Activated T-helper 2 cell treated with anti-CD3 and anti-CD28 coated beads, Interferon-gamma antibody, Interleukin-2, Interleukin-4, amounts not matched to agents 10 μg/mL and 5 μg/mL and 100 μg/mL, durations not matched to agents 14 hours and 24 hours and 36 hours (primary cell): ENCODE measurements at regions of chr1 and their contacts with region 1.

Region 1: GRCh38 chr1:32413507-32414185 is 19.4 kb upstream of the BSDC1 start:
- DNase-seq: peak; percentile 63
- H3K4me3 Mint-ChIP-seq: no peak overlapping the region
- H3K27ac Mint-ChIP-seq: peak overlapping the region; percentile 26
- H3K4me1 Mint-ChIP-seq: peaks cover 3% of the 10 kb centered on the region
- H3K27me3 Mint-ChIP-seq: peaks cover 13% of the 10 kb centered on the region

Region 2: GRCh38 chr1:32159189-32159885 is 254.3 kb before region 1 on chr1:
- intact Hi-C with region 1: no loop called
- DNase-seq: no peak
- H3K4me3 Mint-ChIP-seq: no peak overlapping the region
- H3K27ac Mint-ChIP-seq: peak overlapping the region; percentile 69
- H3K4me1 Mint-ChIP-seq: peaks cover 13% of the 10 kb centered on the region
- H3K27me3 Mint-ChIP-seq: no peaks in the 10 kb centered on the region

Region 3: GRCh38 chr1:32215629-32216480 is 197.8 kb before region 1 on chr1:
- intact Hi-C with region 1: loop called (anchors 2 kb)
- DNase-seq: peak; percentile 53
- H3K4me3 Mint-ChIP-seq: no peak overlapping the region
- H3K27ac Mint-ChIP-seq: peak overlapping the region; percentile 28
- H3K4me1 Mint-ChIP-seq: peaks cover 13% of the 10 kb centered on the region
- H3K27me3 Mint-ChIP-seq: no peaks in the 10 kb centered on the region

Region 4: DNA sequence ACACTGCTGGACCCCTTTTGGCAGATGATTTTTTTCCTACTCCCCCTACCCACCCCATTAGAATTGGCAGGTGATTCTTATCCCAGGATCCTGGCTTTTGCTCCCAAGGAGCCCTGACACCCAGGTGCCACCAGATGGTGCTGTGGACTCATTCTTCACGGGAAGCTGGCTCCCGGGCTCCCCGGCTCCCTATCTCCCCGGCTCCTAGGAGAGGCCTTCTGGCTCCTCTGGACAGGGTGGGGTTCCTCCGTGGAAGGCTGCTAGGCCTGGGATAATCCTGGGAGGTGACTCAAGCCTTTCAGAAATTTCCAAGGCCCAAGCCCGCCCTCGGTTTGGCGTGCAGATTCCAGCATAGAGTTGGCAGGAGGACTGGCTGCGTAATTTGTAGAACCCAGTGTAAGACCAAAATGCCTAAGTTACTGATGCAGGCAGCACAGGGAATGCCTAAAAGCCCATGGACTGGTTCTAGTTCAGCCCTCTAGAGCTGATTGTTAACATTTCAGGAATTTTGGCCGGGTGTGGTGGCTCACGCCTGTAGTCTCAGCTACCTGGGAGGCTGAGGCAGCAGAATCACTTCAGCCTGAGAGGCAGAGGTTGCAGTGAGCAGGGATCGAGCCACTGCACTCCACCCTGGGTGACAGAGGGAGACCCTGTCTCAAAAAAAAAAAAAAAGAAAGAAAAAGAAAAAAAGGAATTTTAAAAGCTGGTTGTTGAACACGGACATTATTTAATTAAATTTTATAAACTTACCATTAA is 12.6 kb before region 1 on chr1:
- intact Hi-C with region 1: loop called (anchors 1 kb)
- DNase-seq: peak; percentile 37
- H3K4me3 Mint-ChIP-seq: no peak overlapping the region
- H3K27ac Mint-ChIP-seq: no peak overlapping the region
- H3K4me1 Mint-ChIP-seq: no peaks in the 10 kb centered on the region
- H3K27me3 Mint-ChIP-seq: peaks cover 8% of the 10 kb centered on the region